Testis (tissue), 5 donors: ENCODE measurements at regions of chr22 and their contacts with region 1.

Region 1: DNA sequence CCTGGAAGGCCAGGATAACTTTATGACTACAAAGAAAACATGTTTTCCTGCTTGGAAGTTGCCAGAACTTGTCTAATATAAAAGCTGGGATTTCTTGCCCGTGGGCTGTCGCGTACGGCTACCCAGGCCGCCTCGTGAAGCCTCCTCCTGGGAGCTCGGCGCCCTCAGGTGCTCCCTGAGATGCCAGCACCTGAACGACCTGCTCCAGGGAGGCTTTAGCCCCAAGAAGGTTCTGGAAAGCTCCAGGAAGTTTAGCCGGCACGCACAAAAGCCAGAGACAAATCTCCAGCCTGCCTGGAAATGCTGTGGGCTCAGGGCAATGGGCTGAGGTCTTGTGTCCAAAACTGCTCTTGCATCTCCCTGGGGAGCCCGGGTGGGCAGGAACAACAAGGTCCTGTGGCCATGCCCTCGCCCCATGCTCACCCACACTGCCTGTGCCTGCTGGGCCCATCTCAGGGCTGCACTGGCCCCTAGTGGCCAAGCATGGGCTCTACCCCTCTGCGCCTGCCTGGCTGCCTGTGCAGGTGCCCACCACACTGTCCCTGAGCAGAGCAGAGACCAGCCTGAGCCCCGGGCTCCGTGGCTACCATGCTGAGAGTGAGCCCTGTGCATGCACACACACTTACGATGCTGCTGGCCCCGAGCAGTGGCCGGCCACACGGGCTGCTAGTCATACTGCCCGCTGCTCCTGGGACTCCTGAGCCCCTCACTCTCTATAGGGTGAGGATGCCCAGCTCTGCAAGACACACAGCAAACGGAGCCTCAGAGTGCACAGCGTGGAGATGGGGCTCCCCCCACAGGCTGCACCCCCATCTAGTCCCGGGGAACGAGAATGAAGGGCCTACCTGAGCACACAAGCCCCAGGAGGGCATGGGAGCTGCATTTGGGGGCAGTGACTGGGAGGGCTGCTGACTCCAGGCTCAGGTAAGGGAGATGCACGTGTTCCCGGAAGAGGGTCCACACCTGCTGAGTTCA is 4.9 kb upstream of the CELSR1 start:
- DNase-seq: peak; percentile 82
- H3K4me3 ChIP-seq: no peak overlapping the region
- H3K27ac ChIP-seq: no peak overlapping the region
- H3K4me1 ChIP-seq: peaks cover 21% of the 10 kb centered on the region
- H3K27me3 ChIP-seq: no peaks in the 10 kb centered on the region
- CTCF ChIP-seq: peak; percentile 70 to 89 (median 88)
- POLR2A ChIP-seq: no peak

Region 2: GRCh38 chr22:46362203-46362933 is 179.9 kb before region 1 on chr22:
- intact Hi-C with region 1: loop called (anchors 5 kb)
- DNase-seq: no peak
- H3K4me3 ChIP-seq: no peak overlapping the region
- H3K27ac ChIP-seq: no peak overlapping the region
- H3K4me1 ChIP-seq: no peaks in the 10 kb centered on the region
- H3K27me3 ChIP-seq: no peaks in the 10 kb centered on the region
- CTCF ChIP-seq: no peak
- POLR2A ChIP-seq: no peak